OCI-LY7 (cell line): ENCODE measurements at regions of chr16 and their contacts with region 1.

Region 1: GRCh38 chr16:71412270-71413160 is 29.3 kb downstream of the TLE7 start:
- DNase-seq: peak; percentile 77
- H3K4me3 ChIP-seq: no peak overlapping the region
- H3K27ac ChIP-seq: no peak overlapping the region
- H3K4me1 ChIP-seq: no peaks in the 10 kb centered on the region
- CTCF ChIP-seq: peak; percentile 95; the same call in 1 of the 2 replicates

Region 2: GRCh38 chr16:71499775-71500364 is 87.4 kb after region 1 on chr16:
- CTCF ChIA-PET with region 1: no interaction called
- POLR2A ChIA-PET with region 1: no interaction called
- intact Hi-C with region 1: loop called (anchors 1 kb)
- DNase-seq: peak; percentile 69
- H3K4me3 ChIP-seq: no peak overlapping the region
- H3K27ac ChIP-seq: no peak overlapping the region
- H3K4me1 ChIP-seq: no peaks in the 10 kb centered on the region
- CTCF ChIP-seq: peak; percentile 93

Region 3: GRCh38 chr16:71528863-71529262 is 116.3 kb after region 1 on chr16:
- CTCF ChIA-PET with region 1: no interaction called
- POLR2A ChIA-PET with region 1: interaction called, 10 read pairs
- intact Hi-C with region 1: no loop called
- DNase-seq: no peak
- H3K4me3 ChIP-seq: no peak overlapping the region
- H3K27ac ChIP-seq: no peak overlapping the region
- H3K4me1 ChIP-seq: peaks cover 26% of the 10 kb centered on the region
- CTCF ChIP-seq: no peak

Region 4: GRCh38 chr16:71537643-71538042 is 125.1 kb after region 1 on chr16:
- CTCF ChIA-PET with region 1: no interaction called
- POLR2A ChIA-PET with region 1: interaction called, 3 read pairs
- intact Hi-C with region 1: loop called (anchors 1 kb)
- DNase-seq: peak; percentile 67
- H3K4me3 ChIP-seq: no peak overlapping the region
- H3K27ac ChIP-seq: no peak overlapping the region
- H3K4me1 ChIP-seq: no peaks in the 10 kb centered on the region
- CTCF ChIP-seq: peak; percentile 81